ENCODE measurements at regions of chr13 and their contacts with region 1.

Region 1: GRCh38 chr13:89066868-89067466 is 1395.8 kb downstream of the SLITRK5 start:
- DNase-seq: peak; percentile 44
- ATAC-seq: peak; percentile 79
- H3K4me3 ChIP-seq: no peak overlapping the region
- H3K27ac ChIP-seq: no peak overlapping the region
- H3K4me1 ChIP-seq: peaks cover 4% of the 10 kb centered on the region
- H3K27me3 ChIP-seq: no peaks in the 10 kb centered on the region
- CTCF ChIP-seq: peak; percentile 72
- EP300 ChIP-seq: no peak
- POLR2A ChIP-seq: no peak
- RAD21 ChIP-seq: no peak

Region 2: GRCh38 chr13:87677496-87678371 is 1389.2 kb before region 1 on chr13:
- CTCF ChIA-PET with region 1: no interaction called
- POLR2A ChIA-PET with region 1: no interaction called
- in situ Hi-C with region 1: no loop called
- intact Hi-C with region 1: loop called (anchors 5 kb)
- DNase-seq: peak; percentile 1
- ATAC-seq: peak; percentile 91
- H3K4me3 ChIP-seq: peak overlapping the region; percentile 25 to 57 (median 43); a peak in 5 of 6 replicates
- H3K27ac ChIP-seq: no peak overlapping the region
- H3K4me1 ChIP-seq: peaks cover 15% of the 10 kb centered on the region
- H3K27me3 ChIP-seq: peaks cover 0 to 50% of the 10 kb centered on the region in 2 experiments; a peak in 4 of 5 replicates
- CTCF ChIP-seq: no peak
- EP300 ChIP-seq: no peak
- POLR2A ChIP-seq: no peak
- RAD21 ChIP-seq: no peak

Region 3: DNA sequence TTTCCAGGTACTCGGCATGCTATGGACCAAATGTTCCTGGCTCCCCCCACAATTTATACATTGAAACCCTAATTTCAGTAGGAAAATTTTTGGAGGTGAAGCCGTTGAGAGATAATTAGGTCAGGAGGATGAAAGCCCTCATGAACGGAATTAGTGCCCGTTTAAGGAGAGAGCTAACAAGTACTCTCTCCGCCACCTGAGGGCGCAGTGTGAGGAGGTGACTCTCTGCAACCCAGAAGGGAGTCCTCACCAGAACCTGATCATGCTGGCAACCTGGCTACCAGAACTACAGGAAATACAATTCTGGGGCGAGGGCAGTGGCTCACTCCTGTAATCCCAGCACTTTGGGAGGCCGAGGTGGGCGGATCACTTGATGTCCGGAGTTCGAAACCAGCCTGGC is 998.0 kb before region 1 on chr13:
- CTCF ChIA-PET with region 1: interaction called, 5 read pairs
- POLR2A ChIA-PET with region 1: no interaction called
- in situ Hi-C with region 1: loop called (anchors 25 kb)
- intact Hi-C with region 1: loop called (anchors 1 kb)
- DNase-seq: peak; percentile 20
- ATAC-seq: peak; percentile 78
- H3K4me3 ChIP-seq: no peak overlapping the region
- H3K27ac ChIP-seq: no peak overlapping the region
- H3K4me1 ChIP-seq: no peaks in the 10 kb centered on the region
- H3K27me3 ChIP-seq: no peaks in the 10 kb centered on the region
- CTCF ChIP-seq: peak; percentile 44
- EP300 ChIP-seq: no peak
- POLR2A ChIP-seq: no peak
- RAD21 ChIP-seq: no peak

Region 4: GRCh38 chr13:88752041-88752440 is 314.9 kb before region 1 on chr13:
- CTCF ChIA-PET with region 1: no interaction called
- POLR2A ChIA-PET with region 1: no interaction called
- in situ Hi-C with region 1: no loop called
- intact Hi-C with region 1: no loop called
- DNase-seq: no peak
- ATAC-seq: no peak
- H3K4me3 ChIP-seq: no peak overlapping the region
- H3K27ac ChIP-seq: no peak overlapping the region
- H3K4me1 ChIP-seq: no peaks in the 10 kb centered on the region
- H3K27me3 ChIP-seq: no peaks in the 10 kb centered on the region
- CTCF ChIP-seq: no peak
- EP300 ChIP-seq: no peak
- POLR2A ChIP-seq: no peak
- RAD21 ChIP-seq: no peak

Region 5: GRCh38 chr13:88887045-88887662 is 179.8 kb before region 1 on chr13:
- CTCF ChIA-PET with region 1: no interaction called
- POLR2A ChIA-PET with region 1: no interaction called
- in situ Hi-C with region 1: no loop called
- intact Hi-C with region 1: loop called (anchors 10 kb)
- DNase-seq: peak; percentile 27
- ATAC-seq: peak; percentile 96
- H3K4me3 ChIP-seq: peak overlapping the region in 1 of 3 experiments; percentile 20; a peak in 1 of 6 replicates
- H3K27ac ChIP-seq: no peak overlapping the region
- H3K4me1 ChIP-seq: no peaks in the 10 kb centered on the region
- H3K27me3 ChIP-seq: no peaks in the 10 kb centered on the region
- CTCF ChIP-seq: peak; percentile 42
- EP300 ChIP-seq: no peak
- POLR2A ChIP-seq: no peak
- RAD21 ChIP-seq: no peak

Measured in HepG2 (cell line).